Naive thymus-derived CD4-positive, alpha-beta T cell (primary cell): ENCODE measurements at regions of chr6 and their contacts with region 1.

Region 1: DNA sequence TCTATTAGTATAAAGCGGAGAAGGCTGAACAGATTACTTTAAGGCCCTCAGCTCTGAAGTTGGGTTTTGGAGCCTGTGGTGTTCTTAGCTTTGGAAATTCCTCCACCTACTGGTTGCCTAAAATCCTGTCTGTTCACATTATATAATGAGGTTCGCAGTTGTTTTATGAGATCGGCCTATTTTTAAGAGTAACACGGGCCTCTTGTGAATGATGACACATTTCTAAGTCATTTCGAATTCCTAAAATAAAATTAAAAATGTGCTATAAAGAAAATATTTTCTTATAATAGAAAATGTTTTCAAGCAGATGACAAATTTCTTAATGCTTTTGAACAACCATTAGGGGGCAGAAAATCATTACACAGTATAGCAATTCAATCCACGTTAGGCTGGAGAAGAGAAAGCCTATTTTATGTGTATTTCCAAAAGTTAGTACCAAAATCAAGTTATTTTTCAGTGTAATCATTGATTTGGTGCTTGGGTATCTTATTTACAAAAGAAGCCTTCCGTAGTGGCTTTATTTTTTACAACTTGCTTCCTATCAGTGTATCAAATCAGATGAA is 15.8 kb upstream of the FAM8A1 start:
- DNase-seq: peak in 7 of 9 donors; percentile 36 to 67 (median 54)
- ATAC-seq: peak; percentile 74
- H3K4me3 ChIP-seq: no peak overlapping the region
- H3K4me3 Mint-ChIP-seq: peak overlapping the region in 3 of 10 donors; percentile 1 to 46 (median 8)
- H3K27ac ChIP-seq: no peak overlapping the region
- H3K27ac Mint-ChIP-seq: peak overlapping the region in 7 of 9 donors; percentile 12 to 90 (median 47)
- H3K4me1 ChIP-seq: peaks cover 0 to 5% of the 10 kb centered on the region in 2 donors
- H3K4me1 Mint-ChIP-seq: peaks cover 10 to 21% (median 12%) of the 10 kb centered on the region in 7 donors
- H3K27me3 ChIP-seq: no peaks in the 10 kb centered on the region
- H3K27me3 Mint-ChIP-seq: peaks cover 0 to 17% (median 0%) of the 10 kb centered on the region in 5 donors

Region 2: GRCh38 chr6:15829156-15829555 is 1755.2 kb before region 1 on chr6:
- CTCF ChIA-PET with region 1: no interaction called
- POLR2A ChIA-PET with region 1: no interaction called
- intact Hi-C with region 1: no loop called
- DNase-seq: no peak
- ATAC-seq: no peak
- H3K4me3 ChIP-seq: no peak overlapping the region
- H3K4me3 Mint-ChIP-seq: no peak overlapping the region
- H3K27ac ChIP-seq: no peak overlapping the region
- H3K27ac Mint-ChIP-seq: no peak overlapping the region
- H3K4me1 ChIP-seq: no peaks in the 10 kb centered on the region
- H3K4me1 Mint-ChIP-seq: peaks cover 0 to 1% (median 0%) of the 10 kb centered on the region in 7 donors
- H3K27me3 ChIP-seq: no peaks in the 10 kb centered on the region
- H3K27me3 Mint-ChIP-seq: peaks cover 0 to 16% (median 5%) of the 10 kb centered on the region in 5 donors

Region 3: GRCh38 chr6:17281100-17281494 is 303.2 kb before region 1 on chr6 and contains the start of gene RBM24:
- CTCF ChIA-PET with region 1: no interaction called
- POLR2A ChIA-PET with region 1: no interaction called
- intact Hi-C with region 1: loop called (anchors 1 to 5 kb)
- DNase-seq: peak in 4 of 9 donors; percentile 3 to 32 (median 10)
- ATAC-seq: peak; percentile 50
- H3K4me3 ChIP-seq: no peak within 1 kb of the TSS
- H3K4me3 Mint-ChIP-seq: peak within 1 kb of the TSS; percentile 75 to 87 (median 80)
- H3K27ac ChIP-seq: no peak within 1 kb of the TSS
- H3K27ac Mint-ChIP-seq: peak within 1 kb of the TSS in 1 of 9 donors; percentile 46
- H3K4me1 ChIP-seq: no peaks in the 10 kb centered on the region
- H3K4me1 Mint-ChIP-seq: peaks cover 6 to 22% (median 14%) of the 10 kb centered on the region in 7 donors
- H3K27me3 ChIP-seq: peaks cover 0 to 10% of the 10 kb centered on the region in 2 donors
- H3K27me3 Mint-ChIP-seq: peaks cover 62 to 84% (median 77%) of the 10 kb centered on the region in 5 donors
- total RNA-seq, gene RBM24: not detected

Region 4: DNA sequence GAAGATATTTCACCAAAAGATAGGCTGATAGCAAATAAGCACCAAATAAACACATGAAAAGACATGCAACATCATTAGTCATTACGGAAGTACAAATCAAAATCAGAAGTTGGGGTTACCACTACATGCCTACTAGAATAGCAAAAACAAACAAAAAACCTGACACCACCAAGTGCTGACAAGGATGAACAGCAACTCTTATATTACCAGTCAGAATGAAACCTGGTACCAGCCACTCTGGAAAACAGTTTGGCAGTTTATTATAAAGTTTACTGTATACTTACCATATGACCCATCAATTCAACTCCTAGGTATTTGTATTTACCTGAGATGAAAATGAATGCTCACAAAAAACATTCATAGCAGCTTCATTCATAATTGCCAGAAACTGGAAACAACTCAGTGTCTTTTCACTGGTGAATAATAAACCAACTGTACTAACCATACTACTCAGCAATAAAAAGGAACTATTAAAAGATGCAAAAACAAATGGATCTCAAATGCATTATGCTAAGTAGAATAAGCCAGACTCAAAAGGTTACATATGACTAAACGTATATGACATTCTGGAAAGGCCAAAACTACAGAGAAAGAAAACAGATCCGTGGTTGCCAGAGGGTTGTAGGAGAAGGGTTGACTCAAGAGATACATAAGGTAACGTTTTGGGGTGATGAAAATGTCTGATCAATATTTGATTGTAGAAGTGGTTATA is 89.4 kb after region 1 on chr6:
- CTCF ChIA-PET with region 1: no interaction called
- POLR2A ChIA-PET with region 1: no interaction called
- intact Hi-C with region 1: loop called in 1 of 2 experiments (anchors 1 kb)
- DNase-seq: no peak
- ATAC-seq: peak; percentile 38
- H3K4me3 ChIP-seq: no peak overlapping the region
- H3K4me3 Mint-ChIP-seq: no peak overlapping the region
- H3K27ac ChIP-seq: no peak overlapping the region
- H3K27ac Mint-ChIP-seq: peak overlapping the region in 1 of 9 donors; percentile 55
- H3K4me1 ChIP-seq: peaks cover 4 to 6% of the 10 kb centered on the region in 2 donors
- H3K4me1 Mint-ChIP-seq: peaks cover 0 to 30% (median 24%) of the 10 kb centered on the region in 7 donors
- H3K27me3 ChIP-seq: no peaks in the 10 kb centered on the region
- H3K27me3 Mint-ChIP-seq: no peaks in the 10 kb centered on the region

Region 5: DNA sequence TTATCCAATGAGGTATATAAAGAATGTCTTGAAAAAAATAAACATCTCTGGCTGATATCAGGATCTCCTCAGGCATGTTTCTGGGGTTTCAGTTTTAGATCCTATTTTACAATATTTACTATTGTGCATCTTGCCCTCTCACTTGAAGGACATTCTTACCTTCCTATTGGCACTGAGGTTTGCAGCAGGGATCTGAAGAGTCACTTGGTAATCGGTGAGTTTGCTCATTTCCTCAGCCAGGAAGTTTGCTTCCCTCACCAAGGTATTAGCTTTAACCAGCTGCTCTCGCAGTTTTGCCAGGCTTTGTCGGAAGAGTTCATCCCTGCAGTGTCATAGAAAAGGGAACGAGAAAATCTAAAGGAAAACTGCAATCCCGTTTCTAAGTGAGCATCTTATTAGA is 224.3 kb after region 1 on chr6:
- CTCF ChIA-PET with region 1: interaction called, 40 read pairs
- POLR2A ChIA-PET with region 1: no interaction called
- intact Hi-C with region 1: loop called (anchors 1 kb)
- DNase-seq: no peak
- ATAC-seq: no peak
- H3K4me3 ChIP-seq: no peak overlapping the region
- H3K4me3 Mint-ChIP-seq: no peak overlapping the region
- H3K27ac ChIP-seq: no peak overlapping the region
- H3K27ac Mint-ChIP-seq: no peak overlapping the region
- H3K4me1 ChIP-seq: no peaks in the 10 kb centered on the region
- H3K4me1 Mint-ChIP-seq: peaks cover 0 to 4% (median 0%) of the 10 kb centered on the region in 7 donors
- H3K27me3 ChIP-seq: no peaks in the 10 kb centered on the region
- H3K27me3 Mint-ChIP-seq: peaks cover 0 to 24% (median 12%) of the 10 kb centered on the region in 5 donors

Region 6: DNA sequence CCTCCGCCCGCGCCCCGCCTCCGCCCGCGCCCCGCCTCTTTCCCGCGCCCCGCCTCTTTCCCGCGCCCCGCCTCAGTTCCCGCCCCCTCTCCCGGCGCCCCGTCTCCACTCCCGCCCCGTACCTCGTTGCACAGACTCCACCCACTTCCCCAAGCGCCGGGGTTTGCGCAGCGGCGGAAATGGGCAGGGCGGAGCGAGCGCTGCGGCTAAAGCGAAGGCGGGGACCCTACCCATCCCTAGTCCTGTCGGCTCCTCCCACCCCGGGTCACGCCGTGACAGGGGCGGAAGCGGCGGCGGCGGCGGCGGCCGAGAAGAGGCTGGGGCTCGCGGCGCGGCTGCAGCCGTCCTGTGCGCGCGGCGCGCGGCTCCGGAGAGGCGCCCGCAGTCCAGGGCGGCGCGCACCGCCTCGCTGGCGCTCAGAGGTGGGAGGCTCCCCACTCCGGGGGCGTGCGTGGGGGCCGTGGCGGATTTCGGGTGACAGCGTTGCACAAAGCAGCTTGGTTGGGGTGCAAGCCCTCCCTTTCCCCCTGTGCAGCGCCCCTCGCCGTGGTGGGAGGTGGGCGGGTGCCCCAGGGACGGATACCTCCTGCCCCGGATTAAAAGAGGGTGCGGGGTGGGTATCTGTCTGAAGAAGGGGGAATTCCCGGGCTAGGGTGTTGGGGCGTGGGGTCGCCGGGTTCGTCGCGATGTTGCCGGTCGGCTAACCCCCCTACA is 571.0 kb after region 1 on chr6 and contains the start of gene KDM1B:
- CTCF ChIA-PET with region 1: no interaction called
- POLR2A ChIA-PET with region 1: no interaction called
- intact Hi-C with region 1: loop called in 1 of 2 experiments (anchors 5 kb)
- DNase-seq: peak; percentile 95 to 100 (median 99)
- ATAC-seq: peak; percentile 95
- H3K4me3 ChIP-seq: peak within 1 kb of the TSS; percentile 95
- H3K4me3 Mint-ChIP-seq: peak within 1 kb of the TSS; percentile 91 to 99 (median 99)
- H3K27ac ChIP-seq: peak within 1 kb of the TSS; percentile 93
- H3K27ac Mint-ChIP-seq: peak within 1 kb of the TSS; percentile 91 to 99 (median 97)
- H3K4me1 ChIP-seq: peaks cover 8 to 17% of the 10 kb centered on the region in 2 donors
- H3K4me1 Mint-ChIP-seq: peaks cover 24 to 36% (median 28%) of the 10 kb centered on the region in 7 donors
- H3K27me3 ChIP-seq: no peaks in the 10 kb centered on the region
- H3K27me3 Mint-ChIP-seq: peaks cover 0 to 7% (median 0%) of the 10 kb centered on the region in 5 donors
- total RNA-seq, gene KDM1B: 7.3 to 25.4 (median 12.5) TPM